Transverse colon (tissue), 4 donors: ENCODE measurements at regions of chr5 and their contacts with region 1.

Region 1: DNA sequence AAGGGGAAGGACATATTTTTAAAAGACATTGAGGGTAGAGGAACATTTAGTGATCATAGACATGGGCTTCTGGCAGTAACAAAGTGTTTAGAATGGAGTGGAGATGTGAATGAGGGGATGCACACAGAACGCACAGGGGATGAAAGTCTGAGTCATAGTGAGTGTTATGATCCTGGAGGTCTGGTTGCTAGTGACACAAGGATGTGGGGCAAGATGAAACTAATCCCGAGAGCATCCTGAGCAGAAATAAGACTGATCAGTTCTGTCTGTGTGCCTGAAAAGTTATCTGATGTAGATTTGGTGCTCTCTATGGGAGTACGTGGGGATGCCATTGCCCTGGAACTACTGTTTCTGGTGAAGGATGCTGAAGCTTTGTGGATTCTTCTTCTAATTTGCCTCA is 141.1 kb downstream of the CHSY3 start:
- DNase-seq: no peak
- H3K4me3 ChIP-seq: no peak overlapping the region
- H3K27ac ChIP-seq: no peak overlapping the region
- H3K4me1 ChIP-seq: no peaks in the 10 kb centered on the region
- H3K27me3 ChIP-seq: no peaks in the 10 kb centered on the region
- CTCF ChIP-seq: no peak
- EP300 ChIP-seq: no peak
- POLR2A ChIP-seq: no peak

Region 2: GRCh38 chr5:130032807-130033206 is 12.5 kb before region 1 on chr5:
- in situ Hi-C with region 1: no loop called
- intact Hi-C with region 1: no loop called
- DNase-seq: no peak
- H3K4me3 ChIP-seq: no peak overlapping the region
- H3K27ac ChIP-seq: no peak overlapping the region
- H3K4me1 ChIP-seq: no peaks in the 10 kb centered on the region
- H3K27me3 ChIP-seq: no peaks in the 10 kb centered on the region
- CTCF ChIP-seq: no peak
- EP300 ChIP-seq: no peak
- POLR2A ChIP-seq: no peak

Region 3: DNA sequence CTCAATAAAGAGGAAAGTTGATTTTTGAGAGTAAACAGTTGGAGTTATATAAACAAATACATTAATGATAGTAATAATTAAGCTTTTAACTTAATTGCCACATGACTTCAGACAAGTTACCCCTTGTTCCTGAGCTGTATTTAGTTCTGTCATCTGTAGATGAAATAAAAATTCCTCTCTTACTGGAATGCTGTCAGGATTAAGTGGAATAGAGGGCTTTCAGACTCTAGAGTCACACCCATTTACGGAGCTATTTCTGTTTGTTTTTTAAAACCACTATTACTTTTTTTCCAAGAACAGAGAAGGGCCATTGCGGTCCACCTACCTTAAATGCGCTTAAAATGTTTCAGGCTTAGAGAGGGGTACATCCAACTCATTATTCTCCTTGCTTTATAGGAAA is 29.5 kb after region 1 on chr5:
- in situ Hi-C with region 1: no loop called
- intact Hi-C with region 1: loop called (anchors 2 kb)
- DNase-seq: no peak
- H3K4me3 ChIP-seq: no peak overlapping the region
- H3K27ac ChIP-seq: no peak overlapping the region
- H3K4me1 ChIP-seq: no peaks in the 10 kb centered on the region
- H3K27me3 ChIP-seq: no peaks in the 10 kb centered on the region
- CTCF ChIP-seq: no peak
- EP300 ChIP-seq: no peak
- POLR2A ChIP-seq: no peak